ENCODE measurements at regions of chr1 and their contacts with region 1.

Region 1: GRCh38 chr1:185595835-185596667 is 138.1 kb upstream of the HMCN1 start:
- DNase-seq: peak; percentile 67
- ATAC-seq: peak; percentile 81
- H3K4me3 ChIP-seq: no peak overlapping the region
- H3K4me3 Mint-ChIP-seq: no peak overlapping the region
- H3K27ac ChIP-seq: no peak overlapping the region
- H3K27ac Mint-ChIP-seq: no peak overlapping the region
- H3K4me1 ChIP-seq: peaks cover 14 to 26% of the 10 kb centered on the region in 2 donors
- H3K4me1 Mint-ChIP-seq: peaks cover 29% of the 10 kb centered on the region
- H3K27me3 ChIP-seq: no peaks in the 10 kb centered on the region
- H3K27me3 Mint-ChIP-seq: no peaks in the 10 kb centered on the region
- CTCF ChIP-seq: peak; percentile 76

Region 2: DNA sequence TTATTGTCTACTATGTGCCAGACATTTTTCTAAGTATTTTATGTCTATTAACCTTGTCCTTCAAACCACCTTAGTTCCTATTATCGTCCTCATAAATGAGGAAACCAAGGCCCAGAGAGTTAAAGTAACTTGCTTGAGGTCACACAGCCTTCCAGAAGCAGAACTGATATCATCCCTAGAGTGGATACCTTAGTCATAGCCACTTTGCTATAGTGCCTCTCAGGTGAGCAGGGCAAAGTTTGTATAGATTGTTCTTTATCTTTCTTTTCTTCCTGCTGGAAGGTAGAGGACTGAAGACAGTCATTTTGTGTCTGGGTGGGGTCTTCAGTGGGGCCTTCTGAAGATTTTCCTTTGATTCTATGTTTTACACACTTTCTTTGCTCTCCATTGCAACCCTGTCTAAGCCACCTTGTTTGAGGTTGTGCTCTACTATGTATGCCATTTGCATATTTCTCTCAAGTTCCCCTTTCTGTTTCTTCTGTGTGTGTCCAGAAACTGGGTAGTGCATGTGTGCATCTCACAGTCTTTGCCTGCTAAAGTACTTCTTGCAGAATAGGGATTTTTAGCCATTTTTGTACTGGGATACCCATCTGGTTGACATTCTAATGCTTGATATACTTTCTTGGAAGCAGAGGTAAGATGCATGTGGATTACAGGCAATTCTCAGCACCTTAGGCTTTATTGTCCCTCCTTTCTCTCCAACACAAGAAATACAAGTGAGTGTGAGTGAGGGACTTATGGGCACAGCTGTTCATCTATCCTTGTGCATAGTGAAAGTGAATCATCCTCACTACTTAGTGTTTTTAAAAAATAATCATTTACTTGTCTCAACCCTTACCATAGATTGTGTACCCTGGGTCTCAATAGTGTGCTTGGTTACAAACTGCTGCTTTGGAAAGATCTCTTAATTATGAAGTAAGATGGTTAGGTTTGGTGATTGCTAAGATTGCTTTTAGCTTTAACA is 69.4 kb before region 1 on chr1:
- CTCF ChIA-PET with region 1: no interaction called
- POLR2A ChIA-PET with region 1: no interaction called
- intact Hi-C with region 1: loop called (anchors 5 kb)
- DNase-seq: peak; percentile 71
- ATAC-seq: peak; percentile 98
- H3K4me3 ChIP-seq: no peak overlapping the region
- H3K4me3 Mint-ChIP-seq: peak overlapping the region; percentile 53
- H3K27ac ChIP-seq: peak overlapping the region; percentile 45 to 71
- H3K27ac Mint-ChIP-seq: peak overlapping the region; percentile 64
- H3K4me1 ChIP-seq: peaks cover 18 to 22% of the 10 kb centered on the region in 2 donors
- H3K4me1 Mint-ChIP-seq: peaks cover 19% of the 10 kb centered on the region
- H3K27me3 ChIP-seq: no peaks in the 10 kb centered on the region
- H3K27me3 Mint-ChIP-seq: no peaks in the 10 kb centered on the region
- CTCF ChIP-seq: no peak

Region 3: DNA sequence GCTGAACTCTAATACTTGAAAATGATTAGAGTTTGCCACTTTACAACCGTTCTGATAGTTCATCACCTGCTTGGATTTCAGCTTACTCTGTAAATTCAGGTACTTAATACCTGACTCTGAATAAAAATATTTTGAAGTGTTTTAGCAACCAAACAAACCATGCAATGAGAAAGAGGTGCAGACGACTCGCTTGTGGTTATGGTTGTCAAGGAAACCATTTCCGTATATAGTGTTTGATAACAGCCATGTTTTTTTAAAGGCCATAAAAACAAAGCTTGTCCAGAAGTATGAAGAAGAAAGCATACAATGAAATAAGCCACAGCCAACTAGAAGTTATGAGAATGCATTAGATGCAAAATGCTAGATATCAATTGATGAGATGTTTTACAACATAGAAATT is 29.1 kb before region 1 on chr1:
- CTCF ChIA-PET with region 1: interaction called, 21 read pairs
- POLR2A ChIA-PET with region 1: no interaction called
- intact Hi-C with region 1: no loop called
- DNase-seq: peak; percentile 85
- ATAC-seq: peak; percentile 83
- H3K4me3 ChIP-seq: peak overlapping the region in 1 of 5 experiments; percentile 4
- H3K4me3 Mint-ChIP-seq: peak overlapping the region; percentile 68
- H3K27ac ChIP-seq: peak overlapping the region; percentile 62 to 72
- H3K27ac Mint-ChIP-seq: peak overlapping the region; percentile 84
- H3K4me1 ChIP-seq: peaks cover 13 to 28% of the 10 kb centered on the region in 2 donors
- H3K4me1 Mint-ChIP-seq: peaks cover 32% of the 10 kb centered on the region
- H3K27me3 ChIP-seq: no peaks in the 10 kb centered on the region
- H3K27me3 Mint-ChIP-seq: no peaks in the 10 kb centered on the region
- CTCF ChIP-seq: no peak

Region 4: GRCh38 chr1:185608177-185608576 is 12.1 kb after region 1 on chr1:
- CTCF ChIA-PET with region 1: interaction called, 21 read pairs
- POLR2A ChIA-PET with region 1: no interaction called
- intact Hi-C with region 1: no loop called
- DNase-seq: peak; percentile 71
- ATAC-seq: peak; percentile 70
- H3K4me3 ChIP-seq: peak overlapping the region in 1 of 5 experiments; percentile 1
- H3K4me3 Mint-ChIP-seq: peak overlapping the region; percentile 14
- H3K27ac ChIP-seq: no peak overlapping the region
- H3K27ac Mint-ChIP-seq: peak overlapping the region; percentile 28
- H3K4me1 ChIP-seq: peaks cover 40 to 45% of the 10 kb centered on the region in 2 donors
- H3K4me1 Mint-ChIP-seq: peaks cover 42% of the 10 kb centered on the region
- H3K27me3 ChIP-seq: no peaks in the 10 kb centered on the region
- H3K27me3 Mint-ChIP-seq: no peaks in the 10 kb centered on the region
- CTCF ChIP-seq: no peak

Region 5: GRCh38 chr1:185632659-185633423 is 36.8 kb after region 1 on chr1:
- CTCF ChIA-PET with region 1: no interaction called
- POLR2A ChIA-PET with region 1: no interaction called
- intact Hi-C with region 1: no loop called
- DNase-seq: peak; percentile 12
- ATAC-seq: no peak
- H3K4me3 ChIP-seq: no peak overlapping the region
- H3K4me3 Mint-ChIP-seq: no peak overlapping the region
- H3K27ac ChIP-seq: no peak overlapping the region
- H3K27ac Mint-ChIP-seq: no peak overlapping the region
- H3K4me1 ChIP-seq: peaks cover 0 to 9% of the 10 kb centered on the region in 2 donors
- H3K4me1 Mint-ChIP-seq: peaks cover 22% of the 10 kb centered on the region
- H3K27me3 ChIP-seq: no peaks in the 10 kb centered on the region
- H3K27me3 Mint-ChIP-seq: no peaks in the 10 kb centered on the region
- CTCF ChIP-seq: no peak

Region 6: GRCh38 chr1:185869590-185869989 is 273.5 kb after region 1 on chr1:
- CTCF ChIA-PET with region 1: no interaction called
- POLR2A ChIA-PET with region 1: no interaction called
- intact Hi-C with region 1: no loop called
- DNase-seq: no peak
- ATAC-seq: no peak
- H3K4me3 ChIP-seq: no peak overlapping the region
- H3K4me3 Mint-ChIP-seq: no peak overlapping the region
- H3K27ac ChIP-seq: no peak overlapping the region
- H3K27ac Mint-ChIP-seq: no peak overlapping the region
- H3K4me1 ChIP-seq: no peaks in the 10 kb centered on the region
- H3K4me1 Mint-ChIP-seq: no peaks in the 10 kb centered on the region
- H3K27me3 ChIP-seq: no peaks in the 10 kb centered on the region
- H3K27me3 Mint-ChIP-seq: peaks cover 7% of the 10 kb centered on the region
- CTCF ChIP-seq: no peak

Measured in B cell (primary cell).